HCT116 (cell line): ENCODE measurements at regions of chr14 and their contacts with region 1.

Region 1: DNA sequence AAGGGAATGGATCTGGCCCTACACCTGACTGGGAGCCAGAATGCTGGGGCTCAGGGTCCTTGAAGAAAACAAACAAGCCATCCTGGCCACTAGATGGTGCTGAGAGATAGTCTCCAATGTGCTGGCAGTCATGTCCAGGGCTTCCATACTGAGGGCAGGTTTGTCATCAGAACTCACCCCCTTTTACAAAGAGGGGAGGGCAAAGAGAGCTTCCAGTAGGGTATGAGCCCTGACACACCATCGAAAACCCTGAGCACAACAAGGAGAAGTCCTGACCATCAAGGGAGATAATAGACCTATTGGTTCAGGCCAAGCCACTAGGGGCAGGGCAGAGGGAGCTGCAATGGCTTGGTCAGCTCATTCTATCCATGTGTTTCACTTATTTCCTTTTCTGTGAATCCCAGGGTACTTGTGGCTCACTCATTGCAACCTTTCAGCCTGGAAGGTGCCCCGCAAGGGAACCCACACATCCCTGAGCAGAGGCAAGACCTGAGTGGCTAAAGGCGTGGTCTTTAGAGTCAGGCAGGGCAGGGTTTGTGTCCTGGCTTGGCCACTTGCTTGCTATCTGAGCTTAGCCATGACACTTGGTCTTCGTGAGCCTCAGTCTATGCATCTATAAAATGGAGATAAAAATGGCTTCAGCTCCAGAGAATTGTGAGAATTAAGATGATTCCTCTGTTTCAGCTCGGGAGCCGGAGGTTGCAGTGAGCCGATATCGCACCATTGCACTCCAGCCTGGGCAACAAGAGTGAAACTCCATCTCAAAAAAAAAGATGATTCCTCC is 6.2 kb upstream of the PLEKHH1 start:
- DNase-seq: peak; percentile 59
- ATAC-seq: peak; percentile 93
- H3K4me3 ChIP-seq: no peak overlapping the region
- H3K27ac ChIP-seq: no peak overlapping the region
- H3K4me1 ChIP-seq: peaks cover 0 to 11% of the 10 kb centered on the region in 2 experiments; a peak in 2 of 4 replicates
- H3K27me3 ChIP-seq: peaks cover 22% of the 10 kb centered on the region; the same call in 1 of the 2 replicates
- CTCF ChIP-seq: peak; percentile 81 to 98 (median 98)
- POLR2A ChIP-seq: no peak
- RAD21 ChIP-seq: peak; percentile 84

Region 2: DNA sequence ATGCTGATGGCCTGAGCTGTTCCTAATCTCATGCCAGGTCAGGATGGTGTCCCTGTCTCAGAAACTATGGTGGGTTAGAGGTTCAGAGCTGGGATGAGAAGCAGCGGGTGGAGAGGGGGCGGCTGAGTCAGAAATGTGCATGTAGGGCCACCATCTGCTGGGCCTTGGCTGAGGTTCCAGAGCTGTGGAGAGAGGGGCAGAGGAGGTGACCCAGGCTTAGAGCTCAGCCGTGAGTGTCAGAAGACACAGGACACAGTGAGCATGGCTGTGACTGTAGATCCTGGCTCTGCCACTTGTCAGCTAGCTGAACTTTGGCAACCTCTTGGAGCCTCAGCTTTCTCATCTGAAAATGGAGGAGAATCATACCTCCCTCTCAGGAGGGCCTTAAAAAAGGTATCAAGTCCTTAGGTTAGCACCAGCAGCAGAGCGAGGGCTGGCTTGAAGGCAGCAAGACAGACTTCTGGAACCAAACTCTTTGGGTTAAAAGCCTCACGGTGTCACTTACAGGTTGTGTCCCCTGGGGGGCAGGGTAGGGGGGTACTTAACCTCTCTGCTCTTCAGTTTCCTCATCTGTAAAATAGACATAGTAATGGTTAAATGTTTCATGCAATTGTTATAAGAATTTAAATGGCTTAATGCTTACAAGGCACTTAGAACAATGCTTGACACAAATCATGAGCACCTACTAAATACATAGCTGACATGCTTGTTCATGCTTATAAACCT is 73.1 kb before region 1 on chr14:
- CTCF ChIA-PET with region 1: no interaction called
- POLR2A ChIA-PET with region 1: no interaction called
- RAD21 ChIA-PET with region 1: no interaction called
- intact Hi-C with region 1: no loop called
- DNase-seq: no peak
- ATAC-seq: no peak
- H3K4me3 ChIP-seq: no peak overlapping the region
- H3K27ac ChIP-seq: no peak overlapping the region
- H3K4me1 ChIP-seq: no peaks in the 10 kb centered on the region
- H3K27me3 ChIP-seq: no peaks in the 10 kb centered on the region
- CTCF ChIP-seq: no peak; a peak in 1 of 6 replicates
- POLR2A ChIP-seq: no peak
- RAD21 ChIP-seq: no peak

Region 3: DNA sequence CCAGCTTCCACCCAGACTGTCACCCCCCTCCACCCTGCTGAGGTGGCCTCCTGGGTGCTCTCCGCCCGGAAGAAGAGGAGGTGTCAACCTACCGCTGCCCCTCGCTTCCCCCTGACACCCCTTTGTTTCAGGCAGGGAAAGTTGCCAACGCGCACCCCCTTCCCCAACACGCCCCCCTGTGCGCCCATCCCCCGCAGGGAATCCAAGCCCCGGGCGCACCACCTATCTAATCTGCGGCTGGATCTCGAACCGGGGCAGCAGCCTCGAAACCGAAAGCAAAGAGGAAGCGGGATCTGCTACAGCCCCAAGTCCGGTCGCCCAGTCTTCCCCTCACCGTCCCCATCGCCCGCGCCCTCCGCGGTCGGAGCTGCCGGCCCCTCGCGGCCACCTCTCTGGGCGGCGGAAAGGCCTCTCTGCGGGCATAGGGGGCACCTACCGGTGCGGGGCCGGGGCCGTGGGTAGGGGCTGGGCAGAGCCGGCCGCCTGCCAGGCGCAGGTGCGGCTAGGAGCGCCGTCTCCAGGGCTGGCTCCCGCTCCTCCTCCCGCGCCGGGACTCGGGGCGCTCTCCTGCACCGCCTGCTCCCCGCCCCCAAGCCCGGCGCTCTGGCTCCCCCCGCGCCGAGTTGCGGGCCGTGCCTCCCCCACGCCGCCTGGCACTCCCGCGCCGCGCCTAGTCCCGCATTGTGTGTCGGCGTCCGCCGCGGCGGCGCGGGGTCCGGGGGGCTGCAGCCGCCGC is 12.1 kb before region 1 on chr14:
- CTCF ChIA-PET with region 1: interaction called, 20 read pairs
- POLR2A ChIA-PET with region 1: no interaction called
- RAD21 ChIA-PET with region 1: no interaction called
- intact Hi-C with region 1: no loop called
- DNase-seq: no peak
- ATAC-seq: peak; percentile 77
- H3K4me3 ChIP-seq: peak overlapping the region; percentile 60 to 70
- H3K27ac ChIP-seq: no peak overlapping the region; the same call in 1 of the 2 replicates
- H3K4me1 ChIP-seq: peaks cover 2 to 22% of the 10 kb centered on the region in 2 experiments; a peak in 2 of 4 replicates
- H3K27me3 ChIP-seq: no peaks in the 10 kb centered on the region
- CTCF ChIP-seq: no peak
- POLR2A ChIP-seq: no peak
- RAD21 ChIP-seq: no peak

Region 4: GRCh38 chr14:67539116-67539515 is 12.2 kb after region 1 on chr14:
- CTCF ChIA-PET with region 1: interaction called, 17 read pairs
- POLR2A ChIA-PET with region 1: no interaction called
- RAD21 ChIA-PET with region 1: no interaction called
- intact Hi-C with region 1: no loop called
- DNase-seq: no peak
- ATAC-seq: no peak
- H3K4me3 ChIP-seq: no peak overlapping the region
- H3K27ac ChIP-seq: no peak overlapping the region
- H3K4me1 ChIP-seq: peaks cover 2 to 6% of the 10 kb centered on the region in 2 experiments
- H3K27me3 ChIP-seq: no peaks in the 10 kb centered on the region
- CTCF ChIP-seq: no peak
- POLR2A ChIP-seq: no peak
- RAD21 ChIP-seq: no peak

Region 5: DNA sequence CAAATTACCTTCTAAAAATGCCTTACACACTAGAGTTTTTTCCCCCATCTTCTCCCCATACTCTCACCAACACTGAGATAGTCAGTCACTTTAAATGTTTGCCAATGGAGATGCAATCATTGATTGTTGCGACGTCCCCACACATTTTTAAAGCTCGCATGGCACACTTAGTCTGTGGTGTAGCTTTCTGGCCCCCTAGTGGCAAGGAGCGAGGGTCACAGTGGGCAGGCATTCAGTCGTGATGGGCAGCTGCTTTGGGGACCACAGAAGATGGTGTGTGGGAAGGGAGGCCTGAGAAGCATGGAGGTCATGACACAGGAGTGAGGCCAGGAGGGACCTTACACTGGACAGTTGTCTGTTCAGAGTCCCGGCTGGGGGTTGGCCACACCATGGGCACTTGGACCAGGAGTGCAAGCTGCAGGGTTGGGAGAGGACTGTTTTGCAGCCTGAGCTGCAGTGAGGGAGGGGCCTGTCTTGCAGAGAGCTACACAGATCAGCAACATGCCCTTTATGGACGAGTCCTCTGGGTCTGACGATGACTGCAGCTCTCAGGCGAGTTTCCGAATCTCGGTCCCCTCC is 44.5 kb after region 1 on chr14:
- CTCF ChIA-PET with region 1: interaction called, 52 read pairs
- POLR2A ChIA-PET with region 1: interaction called, 4 read pairs
- RAD21 ChIA-PET with region 1: interaction called, 14 to 15 read pairs
- intact Hi-C with region 1: loop called (anchors 1 kb)
- DNase-seq: peak; percentile 26
- ATAC-seq: peak; percentile 98
- H3K4me3 ChIP-seq: no peak overlapping the region
- H3K27ac ChIP-seq: no peak overlapping the region
- H3K4me1 ChIP-seq: peaks cover 0 to 4% of the 10 kb centered on the region in 2 experiments; a peak in 1 of 4 replicates
- H3K27me3 ChIP-seq: no peaks in the 10 kb centered on the region
- CTCF ChIP-seq: peak; percentile 86 to 96 (median 91)
- POLR2A ChIP-seq: no peak
- RAD21 ChIP-seq: peak; percentile 92

Region 6: GRCh38 chr14:67719866-67720265 is 193.0 kb after region 1 on chr14:
- CTCF ChIA-PET with region 1: no interaction called
- POLR2A ChIA-PET with region 1: no interaction called
- RAD21 ChIA-PET with region 1: no interaction called
- intact Hi-C with region 1: no loop called
- DNase-seq: no peak
- ATAC-seq: no peak
- H3K4me3 ChIP-seq: no peak overlapping the region
- H3K27ac ChIP-seq: no peak overlapping the region
- H3K4me1 ChIP-seq: no peaks in the 10 kb centered on the region
- H3K27me3 ChIP-seq: peaks cover 6% of the 10 kb centered on the region; the same call in 1 of the 2 replicates
- CTCF ChIP-seq: no peak
- POLR2A ChIP-seq: no peak
- RAD21 ChIP-seq: no peak